GM12878 (cell line): ENCODE measurements at regions of chr16 and their contacts with region 1.

Region 1: GRCh38 chr16:47141773-47142485 is 1.8 kb downstream of the NETO2 start:
- DNase-seq: peak; percentile 86
- ATAC-seq: peak; percentile 75
- H3K4me3 ChIP-seq: peak overlapping the region; percentile 79
- H3K27ac ChIP-seq: peak overlapping the region; percentile 52
- H3K4me1 ChIP-seq: peaks cover 13% of the 10 kb centered on the region
- H3K27me3 ChIP-seq: no peaks in the 10 kb centered on the region
- CTCF ChIP-seq: peak; percentile 95 to 99 (median 99); a peak in 5 of 6 replicates
- EP300 ChIP-seq: no peak
- POLR2A ChIP-seq: peak; percentile 76
- RAD21 ChIP-seq: peak; percentile 92

Region 2: DNA sequence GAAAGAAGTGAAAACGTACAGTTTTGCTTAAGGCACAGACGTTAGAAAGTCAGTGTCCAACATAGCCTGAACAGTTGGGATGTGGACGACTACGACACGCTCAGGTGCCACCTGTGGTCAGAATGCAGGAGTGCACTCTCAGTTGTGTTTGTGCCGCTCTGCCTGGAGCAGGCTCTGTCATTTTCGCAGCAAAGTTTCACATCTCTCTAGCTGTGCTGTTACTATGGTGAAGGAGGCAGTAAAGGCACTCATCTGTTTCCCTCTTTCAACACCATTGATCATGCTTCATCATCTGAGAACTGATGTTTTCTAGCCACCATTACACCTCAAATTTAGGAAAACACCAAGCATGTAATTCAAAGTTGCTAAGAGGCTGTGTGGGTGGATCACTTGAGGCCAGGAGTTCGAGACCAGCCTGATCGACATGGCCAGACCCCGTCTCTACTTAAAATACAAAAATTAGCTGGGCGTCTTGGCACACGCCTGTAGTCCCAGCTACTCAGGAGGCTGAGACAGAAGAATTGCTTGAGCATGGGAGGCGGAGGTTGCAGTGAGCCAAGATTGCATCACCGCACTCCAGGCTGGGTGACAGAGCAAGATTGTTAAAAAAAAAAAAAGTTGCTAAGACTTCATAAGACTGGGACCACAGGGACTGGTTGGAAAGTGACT is 123.6 kb before region 1 on chr16:
- CTCF ChIA-PET with region 1: interaction called, 18 read pairs
- POLR2A ChIA-PET with region 1: no interaction called
- RAD21 ChIA-PET with region 1: interaction called, 29 read pairs
- SMC1A ChIA-PET with region 1: interaction called, 21 read pairs
- in situ Hi-C with region 1: no loop called
- intact Hi-C with region 1: loop called (anchors 5 kb)
- DNase-seq: peak; percentile 98
- ATAC-seq: peak; percentile 97
- H3K4me3 ChIP-seq: no peak overlapping the region
- H3K27ac ChIP-seq: peak overlapping the region; percentile 38; the same call in 1 of the 2 replicates
- H3K4me1 ChIP-seq: peaks cover 31% of the 10 kb centered on the region
- H3K27me3 ChIP-seq: no peaks in the 10 kb centered on the region
- CTCF ChIP-seq: peak; percentile 72 to 86 (median 73)
- EP300 ChIP-seq: peak; percentile 54 to 55; a peak in 3 of 4 replicates
- POLR2A ChIP-seq: no peak
- RAD21 ChIP-seq: peak; percentile 80

Region 3: GRCh38 chr16:47082099-47082865 is 59.6 kb before region 1 on chr16:
- CTCF ChIA-PET with region 1: interaction called, 13 read pairs
- POLR2A ChIA-PET with region 1: no interaction called
- RAD21 ChIA-PET with region 1: interaction called, 6 read pairs
- SMC1A ChIA-PET with region 1: interaction called, 3 read pairs
- in situ Hi-C with region 1: no loop called
- intact Hi-C with region 1: no loop called
- DNase-seq: no peak
- ATAC-seq: no peak
- H3K4me3 ChIP-seq: no peak overlapping the region
- H3K27ac ChIP-seq: no peak overlapping the region
- H3K4me1 ChIP-seq: no peaks in the 10 kb centered on the region
- H3K27me3 ChIP-seq: no peaks in the 10 kb centered on the region
- CTCF ChIP-seq: no peak
- EP300 ChIP-seq: no peak
- POLR2A ChIP-seq: no peak
- RAD21 ChIP-seq: no peak

Region 4: GRCh38 chr16:47213761-47214440 is 72.0 kb after region 1 on chr16:
- CTCF ChIA-PET with region 1: no interaction called
- POLR2A ChIA-PET with region 1: no interaction called
- RAD21 ChIA-PET with region 1: no interaction called
- SMC1A ChIA-PET with region 1: no interaction called
- in situ Hi-C with region 1: no loop called
- intact Hi-C with region 1: no loop called
- DNase-seq: no peak
- ATAC-seq: no peak
- H3K4me3 ChIP-seq: no peak overlapping the region
- H3K27ac ChIP-seq: no peak overlapping the region
- H3K4me1 ChIP-seq: no peaks in the 10 kb centered on the region
- H3K27me3 ChIP-seq: no peaks in the 10 kb centered on the region
- CTCF ChIP-seq: no peak
- EP300 ChIP-seq: no peak
- POLR2A ChIP-seq: no peak
- RAD21 ChIP-seq: no peak

Region 5: GRCh38 chr16:47460711-47461597 is 319.0 kb after region 1 on chr16 and contains the starts of genes ITFG1 and PHKB:
- CTCF ChIA-PET with region 1: interaction called, 6 read pairs
- POLR2A ChIA-PET with region 1: interaction called, 3 read pairs
- RAD21 ChIA-PET with region 1: interaction called, 4 read pairs
- SMC1A ChIA-PET with region 1: interaction called, 4 read pairs
- in situ Hi-C with region 1: no loop called
- intact Hi-C with region 1: loop called (anchors 5 kb)
- DNase-seq: peak; percentile 69
- ATAC-seq: peak; percentile 75
- H3K4me3 ChIP-seq: peak within 1 kb of the TSS; percentile 85
- H3K27ac ChIP-seq: peak within 1 kb of the TSS; percentile 90
- H3K4me1 ChIP-seq: peaks cover 10% of the 10 kb centered on the region
- H3K27me3 ChIP-seq: no peaks in the 10 kb centered on the region
- CTCF ChIP-seq: peak in 1 of 3 experiments; percentile 22; a peak in 1 of 6 replicates
- EP300 ChIP-seq: no peak
- POLR2A ChIP-seq: peak; percentile 95
- RAD21 ChIP-seq: peak; percentile 31; the same call in 1 of the 2 replicates
- polyA plus RNA-seq, gene ITFG1: 9.3 to 15.9 TPM
- polyA plus RNA-seq, gene PHKB: 14.2 to 15.7 TPM

Region 6: GRCh38 chr16:48100696-48101674 is 959.1 kb after region 1 on chr16:
- CTCF ChIA-PET with region 1: interaction called, 7 read pairs
- POLR2A ChIA-PET with region 1: interaction called, 4 read pairs
- RAD21 ChIA-PET with region 1: interaction called, 4 read pairs
- SMC1A ChIA-PET with region 1: interaction called, 5 read pairs
- in situ Hi-C with region 1: no loop called
- intact Hi-C with region 1: loop called (anchors 5 kb)
- DNase-seq: peak; percentile 74
- ATAC-seq: peak; percentile 80
- H3K4me3 ChIP-seq: no peak overlapping the region
- H3K27ac ChIP-seq: peak overlapping the region; percentile 33
- H3K4me1 ChIP-seq: peaks cover 25% of the 10 kb centered on the region
- H3K27me3 ChIP-seq: no peaks in the 10 kb centered on the region
- CTCF ChIP-seq: no peak
- EP300 ChIP-seq: peak in 1 of 2 experiments; percentile 83; a peak in 2 of 4 replicates
- POLR2A ChIP-seq: no peak
- RAD21 ChIP-seq: no peak

Region 7: GRCh38 chr16:48623304-48624016 is 1481.5 kb after region 1 on chr16:
- CTCF ChIA-PET with region 1: no interaction called
- POLR2A ChIA-PET with region 1: no interaction called
- RAD21 ChIA-PET with region 1: no interaction called
- SMC1A ChIA-PET with region 1: no interaction called
- in situ Hi-C with region 1: loop called (anchors 25 kb)
- intact Hi-C with region 1: no loop called
- DNase-seq: peak; percentile 53
- ATAC-seq: peak; percentile 99
- H3K4me3 ChIP-seq: peak overlapping the region; percentile 64
- H3K27ac ChIP-seq: no peak overlapping the region
- H3K4me1 ChIP-seq: peaks cover 11% of the 10 kb centered on the region
- H3K27me3 ChIP-seq: no peaks in the 10 kb centered on the region; a peak in 1 of 4 replicates
- CTCF ChIP-seq: peak; percentile 96 to 99 (median 98)
- EP300 ChIP-seq: no peak
- POLR2A ChIP-seq: no peak
- RAD21 ChIP-seq: peak; percentile 98